AG04449 (cell line): ENCODE measurements at regions of chr9 and their contacts with region 1.

Region 1: DNA sequence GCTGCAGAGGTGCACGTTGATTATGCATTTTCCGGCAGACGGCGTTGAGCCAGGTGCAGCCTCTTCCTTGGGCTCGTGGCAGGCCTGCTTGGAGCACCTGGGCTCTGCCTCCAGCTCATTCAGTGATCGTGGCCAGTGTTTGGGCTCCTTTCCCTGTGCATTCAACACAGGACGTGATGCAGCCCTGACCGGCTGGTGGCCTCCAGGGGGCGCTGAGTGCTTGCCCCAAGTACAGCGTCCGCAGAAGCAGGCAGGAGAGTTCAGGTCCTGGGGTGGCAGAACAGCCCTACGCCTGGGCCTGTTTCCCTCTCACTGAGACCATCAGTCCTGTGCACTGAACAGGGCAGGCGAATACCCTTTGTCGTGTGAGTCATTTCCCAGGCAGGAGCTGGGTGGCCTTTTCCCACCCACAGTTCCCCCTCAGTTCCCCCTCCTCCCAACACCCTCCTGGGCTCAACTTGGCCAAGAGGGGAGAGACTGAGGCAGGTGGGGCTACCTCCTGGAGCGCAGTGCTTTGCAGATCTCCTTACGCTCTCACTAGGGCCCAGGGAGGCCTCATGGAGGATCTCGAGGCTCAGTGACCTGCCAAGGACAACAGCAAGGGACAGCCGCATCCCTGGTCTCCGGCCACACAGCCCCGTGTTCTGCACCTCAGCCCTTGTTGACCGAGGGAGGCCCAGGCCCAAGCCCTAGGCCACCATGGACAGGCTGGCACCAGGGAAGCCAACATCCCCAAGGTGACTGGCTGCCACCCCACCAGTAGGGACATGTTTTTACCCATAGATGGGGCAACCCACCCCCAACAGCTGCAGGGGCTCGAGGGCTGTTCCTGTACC is 52.9 kb downstream of the LRSAM1 start:
- DNase-seq: no peak
- H3K4me3 ChIP-seq: no peak overlapping the region
- CTCF ChIP-seq: peak; percentile 95

Region 2: GRCh38 chr9:127555768-127556397 is 51.7 kb after region 1 on chr9:
- CTCF ChIA-PET with region 1: interaction called, 14 read pairs
- POLR2A ChIA-PET with region 1: no interaction called
- DNase-seq: peak; percentile 73
- H3K4me3 ChIP-seq: peak overlapping the region; percentile 12; the same call in 1 of the 2 replicates
- CTCF ChIP-seq: no peak

Region 3: DNA sequence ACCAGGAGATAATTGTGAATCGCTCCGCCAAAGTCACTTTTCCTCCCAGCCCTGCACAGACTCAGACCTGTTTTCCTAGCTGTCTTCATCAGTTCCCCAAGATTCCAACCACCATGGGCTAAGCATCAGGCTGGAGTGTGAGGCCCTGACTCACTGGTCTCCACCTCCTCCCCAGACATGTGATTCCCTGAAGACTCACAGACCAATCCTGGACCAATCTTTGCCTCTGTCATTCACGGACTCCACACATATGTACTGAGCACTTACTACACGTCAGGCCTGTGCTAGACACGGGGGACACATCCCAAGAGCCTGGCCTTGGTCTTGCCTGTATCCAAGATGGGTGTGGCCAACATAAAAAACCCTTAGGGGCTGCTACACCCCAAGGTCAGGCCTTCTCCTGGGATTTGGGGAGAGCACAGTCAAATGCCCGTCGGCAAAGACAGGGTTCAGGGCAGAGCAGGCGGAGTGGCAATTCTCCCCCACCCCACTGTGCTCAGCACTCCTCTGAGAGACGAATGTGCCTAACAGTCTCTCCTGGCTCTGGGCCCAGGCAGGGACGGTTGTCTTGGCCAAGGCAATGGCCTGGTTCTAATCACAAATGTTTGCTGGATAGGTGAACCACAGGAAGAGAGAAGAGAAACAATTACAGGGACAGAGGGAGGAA is 464.7 kb after region 1 on chr9:
- CTCF ChIA-PET with region 1: no interaction called
- POLR2A ChIA-PET with region 1: no interaction called
- DNase-seq: peak; percentile 70
- H3K4me3 ChIP-seq: no peak overlapping the region
- CTCF ChIP-seq: no peak

Region 4: GRCh38 chr9:128211186-128211980 is 707.2 kb after region 1 on chr9:
- CTCF ChIA-PET with region 1: no interaction called
- POLR2A ChIA-PET with region 1: no interaction called
- DNase-seq: no peak
- H3K4me3 ChIP-seq: no peak overlapping the region
- CTCF ChIP-seq: no peak